ENCODE measurements at regions of chr5 and their contacts with region 1.

Region 1: GRCh38 chr5:96001262-96001661 is 39.6 kb upstream of the ELL2 start:
- DNase-seq: no peak
- CTCF ChIP-seq: no peak

Region 2: DNA sequence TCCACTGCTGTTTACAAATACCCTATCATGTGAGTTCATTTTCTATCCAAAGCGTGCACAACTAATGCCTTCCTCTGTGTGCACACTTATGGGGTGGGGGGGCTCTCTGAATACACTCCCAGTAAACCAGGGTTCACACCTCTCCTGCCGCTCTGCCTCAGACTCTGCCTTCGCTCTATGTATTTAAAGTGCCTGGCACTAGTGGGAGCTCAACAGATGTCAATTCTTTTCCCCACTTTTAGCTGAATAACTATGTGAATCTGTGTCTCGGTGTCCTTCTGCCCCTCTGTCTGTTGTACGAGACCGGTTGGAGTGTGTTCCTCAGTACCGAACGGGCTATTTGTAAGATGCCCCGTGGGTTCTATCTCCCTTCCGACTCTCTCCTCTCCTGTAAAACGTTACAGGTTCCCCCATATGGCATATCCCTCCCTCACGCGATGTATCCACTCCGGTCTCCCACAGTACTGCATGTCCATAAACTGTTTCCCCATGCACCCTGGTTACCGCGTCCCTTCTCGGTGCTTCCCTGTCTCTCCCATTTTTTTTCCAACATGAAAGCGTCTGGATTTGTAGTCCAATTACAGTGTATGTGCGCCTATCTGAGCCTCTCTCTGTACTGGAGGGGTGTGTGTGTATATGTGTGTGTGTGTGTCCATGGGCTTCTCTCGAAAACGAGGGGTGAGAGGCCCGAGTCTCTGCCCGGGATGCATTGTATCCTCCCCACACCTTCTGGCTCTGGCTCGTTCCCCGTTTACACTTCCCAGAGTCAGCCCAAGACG is 41.2 kb before region 1 on chr5:
- CTCF ChIA-PET with region 1: no interaction called
- POLR2A ChIA-PET with region 1: no interaction called
- DNase-seq: no peak
- CTCF ChIP-seq: no peak

Region 3: DNA sequence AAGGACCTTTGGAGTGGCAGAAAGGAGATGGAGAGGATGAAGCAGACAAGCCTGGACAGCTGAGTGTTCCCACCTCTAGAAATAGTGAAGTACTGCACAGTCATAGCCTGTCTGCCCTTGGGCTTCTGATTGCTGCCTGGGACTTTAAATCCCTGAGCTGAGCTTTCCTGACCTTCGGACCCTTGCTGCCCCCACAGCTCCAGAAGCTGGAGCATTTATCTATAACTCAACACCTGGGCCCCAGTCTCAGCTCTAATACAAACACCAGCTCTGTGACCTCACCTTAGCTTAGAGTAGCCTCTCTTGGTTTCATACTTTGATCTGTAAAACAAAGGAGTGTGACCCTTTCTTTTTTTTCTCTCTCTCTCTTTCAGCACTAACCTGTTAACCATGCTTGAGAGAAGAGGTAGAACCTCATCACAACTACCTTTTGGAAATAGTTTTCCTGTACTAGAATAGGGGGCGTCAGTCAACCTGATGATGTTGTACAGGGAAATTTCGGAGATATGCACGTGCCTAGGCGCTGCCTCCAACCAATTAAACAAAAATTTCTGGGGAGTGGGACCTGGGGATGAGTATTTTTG is 14.2 kb before region 1 on chr5:
- CTCF ChIA-PET with region 1: interaction called, 12 read pairs
- POLR2A ChIA-PET with region 1: no interaction called
- DNase-seq: no peak
- CTCF ChIP-seq: no peak

Measured in GM10248 (cell line).